ENCODE measurements at regions of chr2 and their contacts with region 1.

Region 1: DNA sequence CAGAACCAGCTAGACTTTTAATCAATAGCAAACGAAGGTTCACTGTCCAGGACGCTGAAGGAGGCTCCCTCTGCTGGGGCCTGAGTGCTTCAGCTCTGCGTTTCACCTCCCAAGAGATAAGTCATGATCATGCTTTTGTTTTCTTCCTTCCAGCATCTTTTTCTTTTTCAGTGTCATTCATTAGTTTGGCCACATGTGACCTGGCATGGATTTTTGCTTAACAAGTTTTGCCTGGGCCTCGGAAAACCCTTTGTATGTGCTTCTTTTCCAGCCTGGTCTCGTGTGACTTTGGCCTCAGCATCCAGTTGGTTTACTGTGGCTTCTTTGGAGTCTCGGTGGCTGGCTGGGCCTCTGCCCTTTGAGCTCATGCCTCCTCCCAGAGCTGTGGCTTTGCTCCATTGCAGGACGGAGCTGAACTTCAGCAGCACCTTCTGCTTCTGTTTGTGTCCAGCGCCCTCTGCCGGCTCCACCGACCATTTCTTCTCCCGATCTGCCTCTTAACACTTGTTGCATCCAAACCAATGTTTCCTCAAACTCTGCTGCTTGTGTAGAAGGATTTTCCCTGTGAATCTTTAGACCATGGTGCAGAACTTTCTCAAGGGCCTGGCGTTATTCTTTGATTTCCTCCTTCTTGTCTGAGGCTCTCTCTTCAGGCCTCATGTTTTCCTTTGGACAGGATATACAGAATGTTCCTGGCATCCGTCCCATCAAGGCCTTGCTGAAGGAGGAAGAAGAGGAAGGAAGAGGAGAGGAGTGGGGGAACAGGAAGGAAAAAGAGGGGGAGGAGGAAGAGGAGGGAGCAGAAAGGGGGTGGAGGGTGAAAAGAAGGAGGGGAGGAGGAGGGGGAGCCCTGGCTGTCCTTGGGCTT is 23.6 kb upstream of the HES6 start:
- DNase-seq: peak; percentile 88
- H3K4me3 Mint-ChIP-seq: no peak overlapping the region
- H3K27ac Mint-ChIP-seq: no peak overlapping the region
- H3K4me1 Mint-ChIP-seq: peaks cover 29% of the 10 kb centered on the region
- H3K27me3 Mint-ChIP-seq: no peaks in the 10 kb centered on the region

Region 2: GRCh38 chr2:237858294-237859081 is 404.9 kb before region 1 on chr2:
- CTCF ChIA-PET with region 1: interaction called, 24 read pairs
- DNase-seq: peak; percentile 73
- H3K4me3 Mint-ChIP-seq: peak overlapping the region; percentile 72
- H3K27ac Mint-ChIP-seq: no peak overlapping the region
- H3K4me1 Mint-ChIP-seq: peaks cover 26% of the 10 kb centered on the region
- H3K27me3 Mint-ChIP-seq: peaks cover 63% of the 10 kb centered on the region

Region 3: DNA sequence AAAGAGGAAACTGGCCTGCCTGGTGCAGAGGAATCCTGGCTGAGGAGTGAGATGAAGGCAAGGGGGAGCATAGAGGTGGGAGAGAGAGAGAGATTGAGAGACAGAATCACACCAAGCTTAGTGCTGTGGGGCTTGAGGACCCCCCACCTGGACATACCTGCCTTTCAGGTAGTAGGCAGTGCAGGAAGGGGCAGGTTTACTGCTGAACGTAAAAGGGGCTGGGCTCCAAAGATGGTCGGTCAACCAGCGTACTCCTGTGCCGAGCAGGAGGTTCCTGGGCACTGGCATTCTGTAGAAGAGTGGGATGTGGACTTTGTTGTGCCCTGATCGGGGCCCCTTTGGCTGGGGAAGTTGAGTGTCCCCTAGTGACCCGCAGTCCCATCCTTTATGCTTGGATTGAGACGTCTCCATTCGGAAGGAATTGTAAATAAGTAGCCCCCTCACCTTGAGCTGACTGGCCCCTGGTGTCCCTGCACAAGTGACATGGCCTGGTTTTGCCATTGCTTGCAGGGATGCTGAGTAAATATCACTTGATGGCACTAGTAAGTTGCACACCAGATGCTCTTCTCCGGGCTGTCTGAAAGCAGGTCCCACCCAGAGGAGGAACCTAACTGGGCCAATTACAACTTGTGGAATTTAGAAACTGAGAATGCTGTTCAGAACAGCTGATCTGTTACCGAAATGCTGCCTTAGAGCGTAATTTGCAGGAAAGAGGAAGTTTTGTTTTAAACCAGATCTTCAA is 295.1 kb before region 1 on chr2:
- CTCF ChIA-PET with region 1: interaction called, 33 read pairs
- DNase-seq: peak; percentile 77
- H3K4me3 Mint-ChIP-seq: peak overlapping the region; percentile 73
- H3K27ac Mint-ChIP-seq: peak overlapping the region; percentile 65
- H3K4me1 Mint-ChIP-seq: peaks cover 41% of the 10 kb centered on the region
- H3K27me3 Mint-ChIP-seq: no peaks in the 10 kb centered on the region

Region 4: DNA sequence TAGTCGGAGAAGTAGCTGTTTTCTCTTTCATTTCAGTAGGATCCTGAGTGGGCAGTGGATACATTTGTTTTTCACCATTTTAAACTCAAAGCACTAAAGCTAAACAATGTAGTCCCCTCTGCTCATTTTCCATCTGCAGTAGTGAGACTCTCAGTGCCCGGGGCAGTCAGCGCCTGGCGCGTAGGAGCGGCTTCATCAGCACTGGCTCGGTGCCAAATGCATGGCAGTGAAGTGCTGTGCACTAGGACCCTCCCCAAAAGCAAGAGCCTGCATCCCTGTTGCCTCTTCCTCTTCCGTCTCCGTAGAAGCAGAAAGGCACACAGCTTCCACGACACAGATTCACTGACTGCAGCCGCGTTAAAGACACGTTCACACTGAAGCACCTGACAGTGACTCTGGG is 182.3 kb before region 1 on chr2:
- CTCF ChIA-PET with region 1: no interaction called
- DNase-seq: no peak
- H3K4me3 Mint-ChIP-seq: no peak overlapping the region
- H3K27ac Mint-ChIP-seq: no peak overlapping the region
- H3K4me1 Mint-ChIP-seq: no peaks in the 10 kb centered on the region
- H3K27me3 Mint-ChIP-seq: no peaks in the 10 kb centered on the region

Region 5: DNA sequence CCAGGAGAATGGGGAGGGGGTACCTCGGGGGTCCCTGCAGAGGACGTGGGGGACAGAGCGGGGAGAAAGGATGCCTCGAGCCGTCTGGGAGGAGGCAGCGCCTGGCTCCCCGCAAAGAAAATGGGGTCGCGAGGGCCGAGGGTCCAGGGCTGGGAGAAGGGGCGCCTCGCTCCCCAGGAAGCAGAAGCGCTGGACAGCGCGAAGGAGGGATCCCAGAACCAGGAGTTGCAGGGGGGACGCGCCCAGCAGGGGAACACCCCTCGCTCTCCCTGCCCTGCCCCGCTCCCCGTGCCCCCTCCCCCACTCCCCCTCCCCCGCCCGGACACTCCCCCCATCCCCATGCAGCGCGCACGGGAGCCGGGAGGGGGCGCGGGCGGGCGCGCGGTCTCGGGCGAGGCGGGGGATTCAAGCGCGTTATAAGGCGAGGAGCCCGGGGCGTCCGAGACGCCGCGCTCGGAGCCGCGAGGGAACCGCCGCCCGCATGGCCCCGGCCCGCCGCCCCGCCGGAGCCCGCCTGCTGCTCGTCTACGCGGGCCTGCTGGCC is 104.8 kb before region 1 on chr2 and contains the start of gene ERFE:
- CTCF ChIA-PET with region 1: interaction called, 21 read pairs
- DNase-seq: peak; percentile 63
- H3K4me3 Mint-ChIP-seq: peak within 1 kb of the TSS; percentile 65
- H3K27ac Mint-ChIP-seq: no peak within 1 kb of the TSS
- H3K4me1 Mint-ChIP-seq: peaks cover 6% of the 10 kb centered on the region
- H3K27me3 Mint-ChIP-seq: peaks cover 80% of the 10 kb centered on the region

Region 6: DNA sequence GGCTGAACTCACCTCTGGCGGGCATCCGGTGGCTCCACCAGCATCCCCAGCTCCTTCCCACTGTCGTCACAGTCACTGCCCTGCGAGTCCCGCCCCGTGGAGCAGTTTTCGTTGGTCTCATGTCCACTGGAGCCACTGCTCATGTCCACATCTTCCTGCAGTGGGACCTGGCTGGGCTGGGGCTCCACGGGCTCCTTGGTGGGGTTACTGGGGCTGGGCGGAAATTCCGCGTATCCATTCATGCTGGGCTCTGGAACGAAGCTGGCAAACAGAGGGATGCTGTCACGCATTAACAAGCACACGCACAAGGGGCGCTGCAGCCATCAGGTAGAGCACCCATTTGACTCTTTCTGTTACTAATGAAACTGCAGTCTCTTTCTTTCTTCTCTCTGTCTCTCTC is 14.3 kb after region 1 on chr2:
- CTCF ChIA-PET with region 1: interaction called, 19 read pairs
- DNase-seq: no peak
- H3K4me3 Mint-ChIP-seq: no peak overlapping the region
- H3K27ac Mint-ChIP-seq: no peak overlapping the region
- H3K4me1 Mint-ChIP-seq: no peaks in the 10 kb centered on the region
- H3K27me3 Mint-ChIP-seq: no peaks in the 10 kb centered on the region